ENCODE measurements at regions of chr5 and their contacts with region 1.

Region 1: GRCh38 chr5:140647042-140647341 is 438 bp downstream of the NDUFA2 start:
- DNase-seq: no peak
- ATAC-seq: peak; percentile 7
- H3K4me3 Mint-ChIP-seq: peak overlapping the region; percentile 98
- H3K27ac Mint-ChIP-seq: peak overlapping the region; percentile 74
- H3K4me1 Mint-ChIP-seq: peaks cover 10% of the 10 kb centered on the region
- H3K27me3 Mint-ChIP-seq: no peaks in the 10 kb centered on the region
- CTCF ChIP-seq: no peak

Region 2: DNA sequence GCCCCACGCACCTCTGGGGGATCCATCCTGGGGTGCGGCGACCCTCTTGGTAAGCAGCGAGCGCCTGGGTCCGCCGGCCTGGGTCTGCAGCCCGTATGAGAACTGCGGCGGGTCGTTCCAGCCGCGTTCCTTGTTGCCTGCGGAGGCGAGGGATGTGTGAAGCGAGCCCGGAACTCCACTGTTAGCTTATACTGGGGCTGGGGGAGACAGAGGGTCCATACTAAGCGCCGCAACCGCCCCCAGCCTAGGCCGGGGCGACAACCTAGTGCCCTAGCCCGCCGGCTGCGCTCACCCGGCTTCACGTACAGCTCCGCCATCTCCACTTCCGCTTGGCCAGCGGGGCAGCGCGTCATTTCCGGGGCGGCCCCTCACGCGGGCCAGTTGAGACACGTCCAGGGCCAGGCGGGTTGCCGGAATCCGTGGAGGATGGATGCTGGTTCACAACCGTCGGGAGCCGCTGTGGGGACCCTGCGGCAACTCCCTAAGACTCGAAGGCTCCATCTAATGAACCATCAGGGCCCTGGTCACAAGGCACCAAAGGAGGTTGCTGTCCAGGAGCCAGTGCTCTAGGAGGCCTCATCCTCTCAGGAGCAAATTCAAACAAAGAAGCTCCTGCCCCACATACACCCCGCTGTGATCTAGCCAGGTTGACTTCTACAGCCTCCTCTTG is 89.7 kb before region 1 on chr5 and contains the start of gene SRA1:
- CTCF ChIA-PET with region 1: no interaction called
- POLR2A ChIA-PET with region 1: interaction called, 11 read pairs
- DNase-seq: peak; percentile 95
- ATAC-seq: peak; percentile 94
- H3K4me3 Mint-ChIP-seq: peak within 1 kb of the TSS; percentile 87
- H3K27ac Mint-ChIP-seq: peak within 1 kb of the TSS; percentile 88
- H3K4me1 Mint-ChIP-seq: peaks cover 24% of the 10 kb centered on the region
- H3K27me3 Mint-ChIP-seq: no peaks in the 10 kb centered on the region; the same call in 1 of the 2 replicates
- CTCF ChIP-seq: no peak
- total RNA-seq, gene SRA1: 34.5 to 37.8 TPM (median 34.6 TPM) in 3 replicates

Region 3: DNA sequence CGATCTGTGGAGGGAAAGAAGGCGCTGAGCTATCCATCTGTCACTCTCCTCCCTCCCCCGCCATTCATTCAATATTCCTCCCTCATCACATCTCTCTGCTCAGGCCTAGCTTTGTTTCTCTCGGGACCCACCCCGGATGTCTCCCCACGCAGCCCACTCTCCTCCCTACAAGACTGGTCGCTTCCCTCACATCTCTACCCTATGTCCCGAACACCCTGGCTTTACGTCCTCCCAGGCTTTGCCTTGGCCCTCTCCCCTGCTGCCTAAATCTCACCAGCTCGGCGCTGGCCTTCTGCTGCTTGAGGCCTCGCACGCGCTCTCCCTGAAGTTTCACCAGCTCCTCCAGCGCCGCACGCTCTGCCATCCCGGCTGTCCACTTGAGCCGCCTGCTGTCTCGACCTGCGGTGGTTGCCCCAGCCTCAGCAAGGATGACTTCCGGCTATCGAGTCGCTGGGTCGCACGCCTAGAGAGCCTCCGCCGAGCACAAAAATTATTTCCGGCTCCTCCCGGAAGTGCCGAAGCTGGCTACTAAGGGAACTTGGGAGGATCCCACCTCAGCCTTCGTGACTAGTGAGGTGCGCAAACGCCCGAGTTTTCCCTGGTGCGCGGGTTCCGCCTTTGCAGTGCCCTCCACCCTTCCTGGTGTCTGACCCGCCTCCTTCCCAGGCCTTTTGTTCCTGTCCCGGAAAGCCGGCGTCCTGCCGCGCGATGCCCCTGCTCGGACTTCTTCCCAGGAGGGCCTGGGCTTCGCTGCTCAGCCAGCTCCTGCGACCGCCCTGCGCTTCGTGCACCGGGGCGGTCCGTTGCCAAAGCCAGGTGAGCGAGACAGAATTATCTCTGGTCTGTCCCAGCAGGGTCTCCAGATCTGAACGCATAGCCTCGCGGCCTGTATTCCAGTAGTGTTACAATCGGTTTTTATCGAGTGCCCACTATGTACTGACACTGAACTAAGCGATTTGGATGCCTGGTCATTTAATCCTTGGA is 44.2 kb after region 1 on chr5 and contains the starts of genes HARS1 and HARS2:
- CTCF ChIA-PET with region 1: no interaction called
- POLR2A ChIA-PET with region 1: interaction called, 10 read pairs
- DNase-seq: peak; percentile 89
- ATAC-seq: peak; percentile 97
- H3K4me3 Mint-ChIP-seq: peak within 1 kb of the TSS; percentile 100
- H3K27ac Mint-ChIP-seq: peak within 1 kb of the TSS; percentile 98
- H3K4me1 Mint-ChIP-seq: peaks cover 18% of the 10 kb centered on the region
- H3K27me3 Mint-ChIP-seq: no peaks in the 10 kb centered on the region
- CTCF ChIP-seq: no peak
- total RNA-seq, gene HARS1: 51.9 to 55.6 TPM (median 52.5 TPM) in 3 replicates
- total RNA-seq, gene HARS2: 26.8 to 28.9 TPM (median 27.7 TPM) in 3 replicates

Region 4: DNA sequence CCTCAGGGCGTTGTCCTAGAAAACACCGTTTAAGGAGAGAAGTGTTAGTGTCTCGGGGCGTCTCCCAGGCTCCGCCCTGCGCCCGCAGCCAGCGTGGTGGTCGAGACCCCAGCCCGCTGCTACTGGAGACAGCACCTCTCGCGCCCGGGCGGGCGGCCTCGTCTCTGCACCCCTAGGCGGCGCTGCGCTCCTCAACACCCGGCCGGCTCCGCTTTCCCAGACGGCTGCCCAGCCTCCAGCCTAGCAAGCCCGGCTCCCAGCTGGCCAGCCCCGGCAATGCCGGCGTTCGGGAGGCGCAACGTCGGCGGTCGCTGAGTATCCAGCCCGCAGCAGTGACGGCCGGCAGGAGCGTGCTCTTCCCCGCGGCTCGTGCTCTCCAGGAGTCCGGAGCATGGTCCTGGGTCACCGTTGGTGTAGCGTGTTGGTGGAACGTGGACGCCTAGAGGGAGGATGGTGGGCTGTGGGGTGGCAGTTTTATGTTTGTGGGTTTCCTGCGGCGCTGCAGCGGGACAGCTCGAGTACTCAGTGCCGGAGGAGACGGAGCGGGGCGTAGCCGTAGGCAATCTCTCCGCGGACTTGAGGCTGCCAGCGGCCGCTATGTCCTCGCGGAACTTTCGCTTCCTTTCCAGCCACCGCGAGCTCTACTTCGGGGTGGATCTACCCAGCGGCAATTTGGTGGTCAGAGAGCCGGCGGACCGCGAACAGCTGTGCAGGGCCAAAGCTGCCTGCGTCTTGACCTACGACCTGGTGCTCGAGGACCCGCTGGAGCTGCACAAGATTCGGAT is 279.6 kb after region 1 on chr5:
- CTCF ChIA-PET with region 1: no interaction called
- POLR2A ChIA-PET with region 1: no interaction called
- DNase-seq: peak; percentile 98
- ATAC-seq: peak; percentile 86
- H3K4me3 Mint-ChIP-seq: peak overlapping the region; percentile 91
- H3K27ac Mint-ChIP-seq: no peak overlapping the region
- H3K4me1 Mint-ChIP-seq: peaks cover 28% of the 10 kb centered on the region
- H3K27me3 Mint-ChIP-seq: peaks cover 37% of the 10 kb centered on the region
- CTCF ChIP-seq: peak; percentile 87; the same call in 1 of the 2 replicates

Region 5: GRCh38 chr5:140946578-140946977 is 299.6 kb after region 1 on chr5:
- CTCF ChIA-PET with region 1: no interaction called
- POLR2A ChIA-PET with region 1: no interaction called
- DNase-seq: no peak
- ATAC-seq: no peak
- H3K4me3 Mint-ChIP-seq: no peak overlapping the region
- H3K27ac Mint-ChIP-seq: no peak overlapping the region
- H3K4me1 Mint-ChIP-seq: no peaks in the 10 kb centered on the region
- H3K27me3 Mint-ChIP-seq: no peaks in the 10 kb centered on the region
- CTCF ChIP-seq: no peak